ENCODE measurements at regions of chr6 and their contacts with region 1.

Region 1: GRCh38 chr6:56659721-56660380 is 17.2 kb upstream of the DST start:
- DNase-seq: no peak

Region 2: DNA sequence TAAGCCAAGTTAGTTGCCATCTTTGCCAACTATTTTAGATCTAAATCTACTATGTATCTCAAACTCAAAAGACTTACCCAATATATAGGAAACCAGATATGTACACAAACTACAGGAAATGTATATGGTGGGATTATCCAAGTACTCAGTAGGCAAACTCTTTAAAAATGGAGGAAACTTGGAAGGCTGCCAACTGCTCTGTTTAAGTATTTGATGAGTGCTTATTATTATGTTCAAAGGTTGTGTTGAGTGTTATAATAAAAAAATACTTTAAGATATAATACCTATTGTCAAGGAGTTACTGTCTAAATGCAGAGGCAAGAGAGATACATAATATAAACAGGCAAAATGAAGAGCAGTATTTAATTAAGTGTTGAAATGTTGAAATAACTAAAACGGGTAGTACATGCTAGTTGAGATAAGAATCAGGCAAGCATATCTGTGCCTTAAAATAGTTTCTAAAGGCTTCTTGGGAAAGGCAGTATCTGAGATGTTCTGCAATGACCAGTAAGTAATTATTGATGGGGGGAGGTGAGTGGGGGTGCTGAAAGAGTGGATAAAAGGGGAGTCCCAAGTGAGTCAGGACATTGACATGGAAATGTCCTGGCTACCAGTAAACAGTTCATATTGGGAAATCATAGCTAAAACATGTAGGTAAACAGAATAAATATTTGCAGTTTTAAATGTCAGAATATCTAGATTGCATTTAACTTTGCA is 10.6 kb before region 1 on chr6:
- intact Hi-C with region 1: loop called in 1 of 2 experiments (anchors 1 kb)
- DNase-seq: no peak